Activated T-helper 1 cell treated with anti-CD3 and anti-CD28 coated beads, Interleukin-12 subunit alpha, Interleukin-12 subunit beta, Interleukin-2, Interleukin-4 antibody, amounts not matched to agents 30 ng/mL and 10 ng/mL and 1 ng/mL, durations not matched to agents 14 hours and 24 hours and 36 hours (primary cell): ENCODE measurements at regions of chr9 and their contacts with region 1.

Region 1: GRCh38 chr9:20319641-20320337 is 302.5 kb downstream of the MLLT3 start:
- DNase-seq: peak; percentile 37
- H3K4me3 Mint-ChIP-seq: peak overlapping the region; percentile 35
- H3K27ac Mint-ChIP-seq: peak overlapping the region; percentile 91
- H3K4me1 Mint-ChIP-seq: peaks cover 91% of the 10 kb centered on the region
- H3K27me3 Mint-ChIP-seq: no peaks in the 10 kb centered on the region

Region 2: GRCh38 chr9:19456996-19457692 is 862.6 kb before region 1 on chr9:
- intact Hi-C with region 1: no loop called
- DNase-seq: peak; percentile 59
- H3K4me3 Mint-ChIP-seq: peak overlapping the region; percentile 35
- H3K27ac Mint-ChIP-seq: peak overlapping the region; percentile 16
- H3K4me1 Mint-ChIP-seq: peaks cover 15% of the 10 kb centered on the region
- H3K27me3 Mint-ChIP-seq: peaks cover 9% of the 10 kb centered on the region

Region 3: GRCh38 chr9:19976226-19976625 is 343.6 kb before region 1 on chr9:
- intact Hi-C with region 1: loop called (anchors 1 kb)
- DNase-seq: peak; percentile 47
- H3K4me3 Mint-ChIP-seq: peak overlapping the region; percentile 1
- H3K27ac Mint-ChIP-seq: peak overlapping the region; percentile 92
- H3K4me1 Mint-ChIP-seq: peaks cover 51% of the 10 kb centered on the region
- H3K27me3 Mint-ChIP-seq: no peaks in the 10 kb centered on the region

Region 4: DNA sequence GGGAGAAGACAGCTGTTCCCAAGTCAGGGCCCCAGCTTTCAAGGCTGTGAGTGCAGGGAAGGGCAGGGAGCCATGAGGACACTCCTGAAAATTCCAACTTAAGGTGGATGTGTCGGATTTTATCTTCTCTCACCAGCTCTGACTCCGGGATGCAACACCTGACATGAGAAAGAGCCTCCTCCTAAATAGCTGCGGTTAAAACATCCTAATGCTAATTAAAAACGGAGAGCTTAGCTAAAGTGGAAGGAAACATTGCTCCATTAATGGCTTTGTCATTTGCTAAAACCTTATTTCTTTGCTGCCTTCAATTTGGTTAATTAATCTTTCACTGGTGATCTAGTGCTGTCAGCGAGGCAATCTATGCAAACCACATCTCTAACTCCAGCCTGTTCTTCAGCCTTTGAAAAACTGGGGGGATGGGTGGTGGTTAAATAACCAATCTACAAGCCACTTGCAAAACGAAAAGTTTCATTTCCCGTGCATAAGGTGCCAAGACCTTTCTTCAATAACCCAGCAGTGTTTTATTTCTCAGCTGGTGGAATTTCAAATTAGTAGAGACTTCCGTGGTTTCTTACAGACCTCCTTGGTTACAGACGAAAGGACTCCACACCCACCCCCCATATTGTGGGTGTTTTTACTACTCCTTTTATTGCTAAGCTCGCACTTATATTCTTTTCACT is 77.1 kb before region 1 on chr9:
- intact Hi-C with region 1: loop called (anchors 1 kb)
- DNase-seq: peak; percentile 36
- H3K4me3 Mint-ChIP-seq: peak overlapping the region; percentile 36
- H3K27ac Mint-ChIP-seq: peak overlapping the region; percentile 27
- H3K4me1 Mint-ChIP-seq: peaks cover 65% of the 10 kb centered on the region
- H3K27me3 Mint-ChIP-seq: peaks cover 2% of the 10 kb centered on the region

Region 5: GRCh38 chr9:20331095-20331685 is 11.4 kb after region 1 on chr9:
- intact Hi-C with region 1: loop called (anchors 1 kb)
- DNase-seq: no peak
- H3K4me3 Mint-ChIP-seq: no peak overlapping the region
- H3K27ac Mint-ChIP-seq: peak overlapping the region; percentile 69
- H3K4me1 Mint-ChIP-seq: peaks cover 37% of the 10 kb centered on the region
- H3K27me3 Mint-ChIP-seq: peaks cover 2% of the 10 kb centered on the region

Region 6: DNA sequence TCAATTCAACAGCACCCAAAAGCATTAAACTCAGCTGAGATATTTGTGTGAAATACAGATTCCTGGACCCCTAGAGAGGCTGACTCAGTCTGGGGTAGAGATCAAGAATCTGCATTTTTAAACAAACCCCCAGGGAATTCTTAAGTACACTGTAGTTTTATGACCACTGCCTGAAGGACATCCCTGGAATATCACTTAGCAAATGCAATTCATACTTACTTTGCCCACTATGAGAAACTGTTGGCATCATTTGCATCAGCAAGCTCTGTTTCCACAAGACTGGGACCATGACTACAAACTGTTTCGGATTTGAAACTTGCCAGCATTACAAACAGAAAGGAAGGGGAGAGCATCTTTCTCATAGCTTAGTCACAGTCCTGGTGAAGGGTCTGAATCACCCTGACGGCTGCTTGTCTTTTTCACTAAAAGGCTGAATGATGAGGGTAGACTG is 238.8 kb after region 1 on chr9:
- intact Hi-C with region 1: loop called (anchors 2 kb)
- DNase-seq: peak; percentile 18
- H3K4me3 Mint-ChIP-seq: peak overlapping the region; percentile 20
- H3K27ac Mint-ChIP-seq: peak overlapping the region; percentile 47
- H3K4me1 Mint-ChIP-seq: peaks cover 83% of the 10 kb centered on the region
- H3K27me3 Mint-ChIP-seq: no peaks in the 10 kb centered on the region

Region 7: DNA sequence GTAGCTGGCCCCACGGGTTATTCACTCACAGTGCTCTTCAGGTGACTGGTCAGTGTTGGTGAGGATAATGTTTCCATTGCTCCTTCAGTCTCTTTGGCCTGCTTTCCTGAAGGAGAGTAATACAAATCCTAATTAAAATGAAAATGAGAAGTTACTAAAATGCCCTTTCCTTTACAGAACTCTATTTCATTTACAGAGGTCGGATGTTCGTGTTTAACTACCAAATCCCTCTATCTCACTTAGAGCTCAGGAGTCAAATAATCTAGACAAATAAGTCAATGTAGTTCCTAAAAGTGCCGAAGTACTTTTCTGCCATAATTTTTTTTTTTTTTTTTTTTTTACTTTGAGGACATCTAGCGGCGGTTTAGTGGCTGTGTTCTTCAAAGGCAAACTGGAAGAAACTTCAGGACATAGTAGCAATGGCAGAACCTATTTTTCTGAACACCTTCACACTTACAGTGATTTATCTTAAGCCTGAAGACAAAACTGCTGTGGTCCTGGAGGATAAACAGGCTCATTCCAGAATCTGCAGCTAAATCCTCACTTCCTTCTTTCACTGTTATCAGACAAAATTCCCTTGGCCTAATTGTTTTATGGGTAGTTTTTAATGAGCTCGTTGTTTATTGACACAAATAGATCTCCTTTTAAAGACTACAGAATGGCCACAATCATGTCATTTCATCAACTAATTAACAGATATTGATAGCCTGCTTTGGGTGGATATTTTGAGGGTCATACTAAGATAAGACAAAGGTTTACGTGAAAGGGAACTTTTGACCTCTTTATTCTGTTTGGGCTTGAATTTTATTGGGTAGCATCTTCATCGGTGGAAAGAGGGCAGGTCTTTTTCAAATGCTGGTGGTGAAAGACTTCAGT is 1919.3 kb after region 1 on chr9:
- intact Hi-C with region 1: loop called (anchors 5 kb)
- DNase-seq: no peak
- H3K4me3 Mint-ChIP-seq: no peak overlapping the region
- H3K27ac Mint-ChIP-seq: no peak overlapping the region
- H3K4me1 Mint-ChIP-seq: peaks cover 50% of the 10 kb centered on the region
- H3K27me3 Mint-ChIP-seq: peaks cover 43% of the 10 kb centered on the region